ENCODE measurements at regions of chr1 and their contacts with region 1.

Region 1: DNA sequence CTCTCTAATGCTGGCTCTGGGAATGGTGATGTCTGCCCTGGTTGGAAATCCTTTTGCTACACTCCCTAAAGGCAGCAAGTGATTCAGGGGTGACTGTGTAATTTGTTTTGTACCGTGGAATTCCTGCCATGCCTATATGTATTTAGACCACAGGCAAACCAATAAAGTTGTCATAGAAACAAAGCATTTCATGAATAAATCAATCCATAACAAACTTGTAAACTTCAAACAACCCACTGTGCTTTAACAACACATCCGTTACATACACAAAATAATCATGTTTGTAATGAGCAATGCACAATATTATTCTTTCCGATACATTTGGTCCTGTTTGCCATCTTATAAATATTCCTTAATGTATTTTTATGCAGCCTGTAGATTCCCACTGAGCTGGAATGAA is 330.3 kb upstream of the SNX7 start:
- DNase-seq: peak; percentile 96
- ATAC-seq: peak; percentile 91
- H3K4me3 ChIP-seq: no peak overlapping the region; the same call in 1 of the 2 replicates
- H3K27ac ChIP-seq: peak overlapping the region; percentile 97
- H3K4me1 ChIP-seq: peaks cover 64% of the 10 kb centered on the region
- H3K27me3 ChIP-seq: no peaks in the 10 kb centered on the region
- CTCF ChIP-seq: no peak

Region 2: DNA sequence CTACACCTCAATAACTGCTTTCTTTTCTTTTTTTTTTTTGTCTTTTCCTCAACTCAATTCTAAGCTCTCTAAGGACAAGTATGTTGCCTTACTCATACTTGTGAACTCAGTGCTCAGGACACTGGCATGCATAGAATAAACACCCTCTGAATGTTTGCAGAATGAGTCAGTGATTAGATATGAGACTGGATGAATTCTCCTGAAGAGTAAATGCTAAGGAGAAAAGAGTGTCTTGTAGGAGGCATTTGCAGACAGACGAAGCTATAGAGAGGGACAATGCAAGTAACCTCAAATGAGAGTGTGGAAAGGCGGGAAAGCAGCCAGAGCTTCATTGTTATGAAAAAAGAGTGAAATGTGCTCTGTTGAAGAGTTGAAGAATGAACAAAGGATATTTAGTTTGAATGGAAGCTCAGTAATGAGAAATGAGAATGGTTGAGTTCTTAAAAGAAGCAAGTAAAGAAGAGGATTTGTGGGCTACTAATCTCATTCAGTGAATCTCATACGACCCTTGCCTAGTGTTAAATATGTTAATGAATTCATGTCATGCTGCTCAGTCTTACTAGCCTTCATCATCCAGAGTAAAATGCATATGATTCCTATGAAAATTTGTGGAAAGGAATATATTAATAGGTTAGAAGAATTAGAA is 244.3 kb before region 1 on chr1:
- CTCF ChIA-PET with region 1: no interaction called
- POLR2A ChIA-PET with region 1: no interaction called
- intact Hi-C with region 1: loop called (anchors 1 kb)
- DNase-seq: peak; percentile 97
- ATAC-seq: peak; percentile 83
- H3K4me3 ChIP-seq: no peak overlapping the region
- H3K27ac ChIP-seq: peak overlapping the region; percentile 74
- H3K4me1 ChIP-seq: peaks cover 66% of the 10 kb centered on the region
- H3K27me3 ChIP-seq: no peaks in the 10 kb centered on the region
- CTCF ChIP-seq: no peak

Region 3: GRCh38 chr1:98126740-98127139 is 204.5 kb before region 1 on chr1:
- CTCF ChIA-PET with region 1: no interaction called
- POLR2A ChIA-PET with region 1: no interaction called
- intact Hi-C with region 1: loop called (anchors 2 kb)
- DNase-seq: peak; percentile 67
- ATAC-seq: peak; percentile 96
- H3K4me3 ChIP-seq: no peak overlapping the region
- H3K27ac ChIP-seq: peak overlapping the region; percentile 60
- H3K4me1 ChIP-seq: peaks cover 17% of the 10 kb centered on the region
- H3K27me3 ChIP-seq: no peaks in the 10 kb centered on the region
- CTCF ChIP-seq: no peak

Region 4: GRCh38 chr1:98292994-98293393 is 38.2 kb before region 1 on chr1:
- CTCF ChIA-PET with region 1: no interaction called
- POLR2A ChIA-PET with region 1: interaction called, 3 read pairs
- intact Hi-C with region 1: loop called (anchors 2 kb)
- DNase-seq: peak; percentile 78
- ATAC-seq: peak; percentile 95
- H3K4me3 ChIP-seq: no peak overlapping the region
- H3K27ac ChIP-seq: peak overlapping the region; percentile 48
- H3K4me1 ChIP-seq: peaks cover 32% of the 10 kb centered on the region
- H3K27me3 ChIP-seq: no peaks in the 10 kb centered on the region
- CTCF ChIP-seq: no peak

Region 5: DNA sequence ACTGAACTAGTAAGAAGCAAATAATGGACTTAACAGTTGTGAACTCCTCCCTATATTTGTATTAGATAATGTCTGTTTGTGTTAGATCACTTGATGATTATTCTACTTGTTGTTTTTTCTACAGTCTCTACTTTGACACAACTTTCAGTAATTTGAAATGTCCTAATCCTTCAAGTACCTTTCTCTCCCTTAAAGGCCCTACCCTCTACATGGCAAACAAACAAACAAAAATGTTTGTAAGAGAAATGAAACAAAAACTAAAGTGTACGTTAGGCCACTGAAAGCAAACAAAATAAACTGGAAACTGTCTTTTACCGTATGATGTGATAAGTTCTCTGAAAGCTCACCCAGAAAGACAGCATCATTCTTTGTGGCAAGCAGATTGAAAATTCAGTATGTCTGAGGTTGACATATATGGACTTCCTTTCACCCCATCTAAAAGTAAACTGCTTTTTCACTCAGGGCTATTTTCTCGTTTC is 74.4 kb after region 1 on chr1:
- CTCF ChIA-PET with region 1: no interaction called
- POLR2A ChIA-PET with region 1: no interaction called
- intact Hi-C with region 1: loop called (anchors 1 kb)
- DNase-seq: peak; percentile 9
- ATAC-seq: peak; percentile 67
- H3K4me3 ChIP-seq: peak overlapping the region; percentile 26; the same call in 1 of the 2 replicates
- H3K27ac ChIP-seq: no peak overlapping the region
- H3K4me1 ChIP-seq: peaks cover 17% of the 10 kb centered on the region; the same call in 1 of the 2 replicates
- H3K27me3 ChIP-seq: no peaks in the 10 kb centered on the region
- CTCF ChIP-seq: no peak